Endothelial cell of umbilical vein (primary cell): ENCODE measurements at regions of chr5 and their contacts with region 1.

Region 1: GRCh38 chr5:136686192-136686872 is 321.0 kb upstream of the TRPC7 start:
- DNase-seq: peak; percentile 51
- H3K4me3 ChIP-seq: no peak overlapping the region
- H3K27ac ChIP-seq: peak overlapping the region; percentile 32
- H3K4me1 ChIP-seq: peaks cover 3% of the 10 kb centered on the region
- H3K27me3 ChIP-seq: no peaks in the 10 kb centered on the region
- CTCF ChIP-seq: peak; percentile 46 to 55
- POLR2A ChIP-seq: no peak

Region 2: DNA sequence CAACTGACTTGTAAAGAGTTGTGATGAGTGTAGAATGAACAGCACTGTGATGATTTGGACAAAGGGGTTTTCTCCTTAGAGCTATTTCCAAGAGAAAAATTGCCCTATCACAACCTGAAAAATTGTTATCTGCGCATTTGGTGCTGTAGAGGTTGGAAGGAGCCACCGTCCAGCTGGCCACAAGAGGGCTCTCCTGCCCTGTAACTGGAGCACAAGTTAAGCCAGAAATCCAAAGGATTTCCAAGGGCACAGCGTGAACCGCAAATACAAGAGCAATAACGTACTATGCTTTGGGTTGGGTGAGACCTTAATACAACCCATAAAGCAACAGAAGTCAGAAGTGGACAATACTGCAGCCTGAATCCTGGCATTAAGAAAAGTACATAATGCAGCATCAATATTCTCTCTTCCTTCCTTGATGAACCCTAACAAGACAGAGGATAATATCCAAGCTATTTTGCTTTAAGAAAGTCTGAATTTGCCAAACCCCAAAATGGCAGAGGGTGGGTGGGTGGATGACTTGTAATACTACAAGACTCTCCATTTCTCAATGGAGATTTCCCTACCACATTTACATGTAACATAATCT is 436.6 kb before region 1 on chr5:
- CTCF ChIA-PET with region 1: interaction called, 36 read pairs
- POLR2A ChIA-PET with region 1: no interaction called
- dilution Hi-C with region 1: no loop called
- intact Hi-C with region 1: loop called (anchors 1 kb)
- DNase-seq: peak; percentile 64
- H3K4me3 ChIP-seq: no peak overlapping the region
- H3K27ac ChIP-seq: no peak overlapping the region
- H3K4me1 ChIP-seq: no peaks in the 10 kb centered on the region
- H3K27me3 ChIP-seq: peaks cover 5 to 13% of the 10 kb centered on the region in 2 experiments
- CTCF ChIP-seq: peak; percentile 84 to 87
- POLR2A ChIP-seq: no peak

Region 3: GRCh38 chr5:136364307-136364706 is 322.0 kb before region 1 on chr5:
- CTCF ChIA-PET with region 1: interaction called, 32 read pairs
- POLR2A ChIA-PET with region 1: no interaction called
- dilution Hi-C with region 1: no loop called
- intact Hi-C with region 1: loop called (anchors 2 kb)
- DNase-seq: no peak
- H3K4me3 ChIP-seq: no peak overlapping the region
- H3K27ac ChIP-seq: no peak overlapping the region
- H3K4me1 ChIP-seq: no peaks in the 10 kb centered on the region
- H3K27me3 ChIP-seq: peaks cover 2 to 20% of the 10 kb centered on the region in 2 experiments
- CTCF ChIP-seq: peak in 1 of 2 donors; percentile 15
- POLR2A ChIP-seq: no peak

Region 4: DNA sequence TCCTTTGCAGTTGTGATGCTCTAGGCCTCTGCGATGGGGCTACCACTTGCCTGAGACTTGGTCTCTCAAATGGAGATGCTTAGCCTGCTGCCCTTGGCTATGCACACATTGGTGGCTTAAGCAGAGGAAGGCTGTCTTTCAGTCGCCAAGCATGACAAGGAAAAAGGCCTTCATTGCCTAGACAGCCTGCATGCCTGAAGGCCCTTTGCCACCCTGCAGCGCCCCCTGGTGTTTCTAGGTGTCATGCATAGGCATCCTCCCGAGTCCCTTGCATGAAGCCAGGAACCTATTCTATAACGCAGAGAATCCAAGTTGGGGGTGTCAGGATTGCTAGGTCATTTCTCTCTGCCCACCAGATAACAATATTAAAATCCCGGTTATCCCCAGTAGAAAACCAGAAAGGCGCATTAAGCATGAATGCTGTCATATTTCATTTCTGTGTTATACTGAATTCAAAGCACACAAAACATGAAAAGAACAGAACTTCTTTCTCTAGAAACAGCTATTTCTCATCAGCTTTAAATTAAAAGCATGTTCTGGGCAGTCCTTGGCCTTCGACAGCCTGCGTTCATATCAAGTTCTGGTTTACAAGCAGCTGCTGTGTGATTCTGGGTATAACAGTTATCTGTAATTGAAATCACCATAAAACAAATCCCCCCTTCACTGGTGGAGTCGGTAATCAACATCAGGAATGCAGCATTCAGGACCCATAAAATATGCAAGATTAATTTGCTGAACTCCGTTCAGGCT is 261.3 kb before region 1 on chr5:
- CTCF ChIA-PET with region 1: interaction called, 3 read pairs
- POLR2A ChIA-PET with region 1: no interaction called
- dilution Hi-C with region 1: no loop called
- intact Hi-C with region 1: loop called (anchors 1 kb)
- DNase-seq: peak; percentile 58
- H3K4me3 ChIP-seq: no peak overlapping the region
- H3K27ac ChIP-seq: no peak overlapping the region
- H3K4me1 ChIP-seq: no peaks in the 10 kb centered on the region
- H3K27me3 ChIP-seq: peaks cover 5 to 8% of the 10 kb centered on the region in 2 experiments
- CTCF ChIP-seq: peak; percentile 86 to 88
- POLR2A ChIP-seq: no peak

Region 5: GRCh38 chr5:136620016-136620419 is 66.3 kb before region 1 on chr5:
- CTCF ChIA-PET with region 1: interaction called, 10 read pairs
- POLR2A ChIA-PET with region 1: no interaction called
- dilution Hi-C with region 1: no loop called
- intact Hi-C with region 1: loop called (anchors 2 kb)
- DNase-seq: peak; percentile 91
- H3K4me3 ChIP-seq: no peak overlapping the region
- H3K27ac ChIP-seq: peak overlapping the region; percentile 96
- H3K4me1 ChIP-seq: peaks cover 59% of the 10 kb centered on the region
- H3K27me3 ChIP-seq: no peaks in the 10 kb centered on the region
- CTCF ChIP-seq: no peak
- POLR2A ChIP-seq: peak; percentile 64

Region 6: GRCh38 chr5:136655429-136655828 is 30.9 kb before region 1 on chr5:
- CTCF ChIA-PET with region 1: interaction called, 5 read pairs
- POLR2A ChIA-PET with region 1: no interaction called
- dilution Hi-C with region 1: no loop called
- intact Hi-C with region 1: loop called (anchors 1 kb)
- DNase-seq: peak; percentile 84
- H3K4me3 ChIP-seq: no peak overlapping the region
- H3K27ac ChIP-seq: peak overlapping the region; percentile 67
- H3K4me1 ChIP-seq: peaks cover 25% of the 10 kb centered on the region
- H3K27me3 ChIP-seq: no peaks in the 10 kb centered on the region
- CTCF ChIP-seq: no peak
- POLR2A ChIP-seq: peak; percentile 38

Region 7: GRCh38 chr5:136769900-136770684 is 83.8 kb after region 1 on chr5:
- CTCF ChIA-PET with region 1: interaction called, 20 read pairs
- POLR2A ChIA-PET with region 1: no interaction called
- dilution Hi-C with region 1: no loop called
- intact Hi-C with region 1: loop called (anchors 1 kb)
- DNase-seq: peak; percentile 66
- H3K4me3 ChIP-seq: no peak overlapping the region
- H3K27ac ChIP-seq: no peak overlapping the region
- H3K4me1 ChIP-seq: no peaks in the 10 kb centered on the region
- H3K27me3 ChIP-seq: peaks cover 4 to 7% of the 10 kb centered on the region in 2 experiments
- CTCF ChIP-seq: peak; percentile 86 to 87
- POLR2A ChIP-seq: no peak

Region 8: GRCh38 chr5:137136991-137137632 is 450.8 kb after region 1 on chr5:
- CTCF ChIA-PET with region 1: no interaction called
- POLR2A ChIA-PET with region 1: no interaction called
- dilution Hi-C with region 1: no loop called
- intact Hi-C with region 1: no loop called
- DNase-seq: peak; percentile 42
- H3K4me3 ChIP-seq: no peak overlapping the region
- H3K27ac ChIP-seq: no peak overlapping the region
- H3K4me1 ChIP-seq: peaks cover 3% of the 10 kb centered on the region
- H3K27me3 ChIP-seq: no peaks in the 10 kb centered on the region
- CTCF ChIP-seq: no peak
- POLR2A ChIP-seq: no peak

Region 9: GRCh38 chr5:137344723-137345322 is 658.5 kb after region 1 on chr5:
- CTCF ChIA-PET with region 1: no interaction called
- POLR2A ChIA-PET with region 1: no interaction called
- dilution Hi-C with region 1: no loop called
- intact Hi-C with region 1: no loop called
- DNase-seq: peak; percentile 76
- H3K4me3 ChIP-seq: no peak overlapping the region
- H3K27ac ChIP-seq: peak overlapping the region; percentile 7
- H3K4me1 ChIP-seq: peaks cover 55% of the 10 kb centered on the region
- H3K27me3 ChIP-seq: no peaks in the 10 kb centered on the region
- CTCF ChIP-seq: peak; percentile 73 to 85
- POLR2A ChIP-seq: no peak

Region 10: DNA sequence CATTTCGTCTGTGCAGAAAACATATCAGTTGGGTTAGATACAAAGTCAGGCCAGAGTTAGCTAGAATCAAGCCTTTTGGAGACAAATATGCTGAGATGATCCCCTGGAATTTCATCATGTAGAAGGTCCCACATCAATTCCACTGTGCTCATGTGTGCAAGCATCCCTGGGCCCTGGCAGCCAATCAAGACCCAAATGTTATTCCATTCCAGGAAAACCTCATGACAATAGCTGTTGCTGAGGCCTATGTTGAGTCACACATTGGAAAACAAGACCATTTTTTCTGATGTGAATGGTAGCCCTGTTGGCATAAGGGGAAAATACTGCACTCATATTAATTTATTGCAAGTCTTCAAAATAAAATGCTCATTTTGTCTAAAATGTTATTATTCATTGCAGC is 801.3 kb after region 1 on chr5:
- CTCF ChIA-PET with region 1: no interaction called
- POLR2A ChIA-PET with region 1: no interaction called
- dilution Hi-C with region 1: no loop called
- intact Hi-C with region 1: no loop called
- DNase-seq: peak; percentile 87
- H3K4me3 ChIP-seq: no peak overlapping the region
- H3K27ac ChIP-seq: peak overlapping the region; percentile 77
- H3K4me1 ChIP-seq: peaks cover 28% of the 10 kb centered on the region
- H3K27me3 ChIP-seq: no peaks in the 10 kb centered on the region
- CTCF ChIP-seq: no peak
- POLR2A ChIP-seq: no peak